GM10248 (cell line): ENCODE measurements at regions of chr9 and their contacts with region 1.

Region 1: DNA sequence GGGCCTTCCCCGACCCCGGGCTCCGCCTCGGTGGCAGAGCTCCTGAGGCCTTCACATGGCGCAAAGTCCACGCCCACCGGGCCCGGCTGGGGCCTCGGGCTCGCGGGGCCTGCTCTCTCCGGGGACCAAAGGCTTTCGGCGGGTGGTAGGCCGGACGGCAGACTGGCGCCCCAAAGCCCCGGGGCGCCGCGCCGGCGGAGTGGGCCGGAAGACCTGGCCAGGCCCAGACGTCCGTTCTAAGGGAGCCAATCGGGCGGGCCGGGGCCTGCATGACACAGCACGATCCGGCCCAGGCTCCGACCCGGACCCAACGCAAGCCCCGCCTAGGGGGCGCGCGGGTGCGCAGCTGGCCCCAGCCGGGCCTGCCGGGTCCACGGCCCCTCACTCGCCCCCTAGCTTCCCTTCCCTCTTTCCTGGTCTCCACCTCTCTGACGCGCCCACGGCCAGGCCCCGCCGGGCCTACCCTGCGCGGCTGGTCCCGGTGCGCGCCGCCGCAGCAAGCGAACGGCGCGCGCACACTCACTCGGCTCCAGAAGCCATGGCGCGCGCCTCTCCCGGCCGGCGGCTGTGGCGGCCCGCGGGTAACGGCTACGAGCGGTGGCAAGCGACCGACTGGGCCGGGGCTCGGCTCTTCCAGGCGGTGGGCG is 488 bp downstream of the VCP start:
- DNase-seq: peak; percentile 85
- CTCF ChIP-seq: peak; percentile 41

Region 2: GRCh38 chr9:35014517-35014916 is 57.4 kb before region 1 on chr9:
- CTCF ChIA-PET with region 1: no interaction called
- POLR2A ChIA-PET with region 1: no interaction called
- DNase-seq: no peak
- CTCF ChIP-seq: no peak

Region 3: GRCh38 chr9:35056571-35057270 is 15.2 kb before region 1 on chr9:
- CTCF ChIA-PET with region 1: interaction called, 72 read pairs
- POLR2A ChIA-PET with region 1: interaction called, 10 read pairs
- DNase-seq: no peak
- CTCF ChIP-seq: no peak